Activated CD4-positive, alpha-beta memory T cell treated with anti-CD3 and anti-CD28 coated beads for 36 hours (primary cell): ENCODE measurements at regions of chr3 and their contacts with region 1.

Region 1: GRCh38 chr3:32467333-32468070 is 35.1 kb downstream of the CMTM6 start:
- DNase-seq: peak; percentile 82
- H3K4me3 Mint-ChIP-seq: peak overlapping the region; percentile 4
- H3K27ac Mint-ChIP-seq: no peak overlapping the region
- H3K4me1 Mint-ChIP-seq: peaks cover 40% of the 10 kb centered on the region
- H3K27me3 Mint-ChIP-seq: no peaks in the 10 kb centered on the region

Region 2: GRCh38 chr3:32177702-32178198 is 289.8 kb before region 1 on chr3:
- CTCF ChIA-PET with region 1: interaction called, 20 read pairs
- POLR2A ChIA-PET with region 1: no interaction called
- intact Hi-C with region 1: loop called (anchors 1 kb)
- DNase-seq: peak; percentile 73
- H3K4me3 Mint-ChIP-seq: peak overlapping the region; percentile 25
- H3K27ac Mint-ChIP-seq: no peak overlapping the region
- H3K4me1 Mint-ChIP-seq: peaks cover 12% of the 10 kb centered on the region
- H3K27me3 Mint-ChIP-seq: no peaks in the 10 kb centered on the region

Region 3: GRCh38 chr3:32374788-32375595 is 92.5 kb before region 1 on chr3:
- CTCF ChIA-PET with region 1: interaction called, 116 read pairs
- POLR2A ChIA-PET with region 1: no interaction called
- intact Hi-C with region 1: loop called (anchors 1 kb)
- DNase-seq: peak; percentile 67
- H3K4me3 Mint-ChIP-seq: peak overlapping the region; percentile 5
- H3K27ac Mint-ChIP-seq: peak overlapping the region; percentile 53
- H3K4me1 Mint-ChIP-seq: peaks cover 23% of the 10 kb centered on the region
- H3K27me3 Mint-ChIP-seq: no peaks in the 10 kb centered on the region

Region 4: DNA sequence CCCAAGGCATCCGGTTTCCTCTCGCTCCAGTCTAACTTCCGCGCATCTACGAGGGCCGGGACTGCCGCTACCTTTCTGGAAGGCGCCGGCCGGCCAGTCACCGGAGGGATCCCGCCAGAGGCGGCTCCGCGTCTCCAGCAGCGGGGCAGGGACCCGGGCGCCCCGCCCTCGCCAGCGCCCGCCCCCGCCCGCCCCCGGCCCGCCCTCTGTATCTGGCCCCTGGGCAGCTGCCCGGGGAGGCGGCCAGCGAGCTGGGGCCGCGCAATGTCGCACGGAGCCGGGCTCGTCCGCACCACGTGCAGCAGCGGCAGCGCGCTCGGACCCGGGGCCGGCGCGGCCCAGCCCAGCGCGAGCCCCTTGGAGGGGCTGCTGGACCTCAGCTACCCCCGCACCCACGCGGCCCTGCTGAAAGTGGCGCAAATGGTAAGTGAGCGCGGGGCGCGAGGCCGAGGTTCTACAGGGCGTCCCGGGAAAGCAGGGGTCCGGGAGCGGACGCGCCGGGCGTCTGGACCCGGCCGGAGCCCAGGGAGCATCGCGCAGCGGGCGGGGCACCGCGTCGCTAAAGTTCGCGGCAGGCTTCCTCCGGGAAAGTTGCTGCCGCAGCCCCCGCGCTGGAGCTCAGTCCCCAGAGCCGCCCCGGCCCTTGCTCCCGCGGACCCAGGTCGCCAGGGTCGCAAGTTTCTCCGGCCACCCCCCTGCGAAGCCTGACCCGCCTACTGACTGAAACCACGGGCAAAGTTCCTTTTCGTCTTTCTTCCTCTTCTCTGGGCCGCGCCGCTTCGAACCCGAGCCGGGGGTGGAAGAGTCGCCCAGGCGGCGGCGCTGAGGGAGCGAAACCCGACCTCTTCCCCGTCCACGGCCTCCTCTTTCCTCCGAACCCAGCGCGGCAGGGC is 75.6 kb before region 1 on chr3 and contains the start of gene CMTM7:
- CTCF ChIA-PET with region 1: interaction called, 33 read pairs
- POLR2A ChIA-PET with region 1: interaction called, 3 read pairs
- intact Hi-C with region 1: no loop called
- DNase-seq: peak; percentile 81
- H3K4me3 Mint-ChIP-seq: peak within 1 kb of the TSS; percentile 98
- H3K27ac Mint-ChIP-seq: peak within 1 kb of the TSS; percentile 95
- H3K4me1 Mint-ChIP-seq: peaks cover 55% of the 10 kb centered on the region
- H3K27me3 Mint-ChIP-seq: no peaks in the 10 kb centered on the region
- total RNA-seq, gene CMTM7: 46.1 to 47.1 TPM

Region 5: GRCh38 chr3:32414520-32415202 is 52.8 kb before region 1 on chr3:
- CTCF ChIA-PET with region 1: interaction called, 16 read pairs
- POLR2A ChIA-PET with region 1: no interaction called
- intact Hi-C with region 1: no loop called
- DNase-seq: peak; percentile 68
- H3K4me3 Mint-ChIP-seq: peak overlapping the region; percentile 49
- H3K27ac Mint-ChIP-seq: peak overlapping the region; percentile 94
- H3K4me1 Mint-ChIP-seq: peaks cover 65% of the 10 kb centered on the region
- H3K27me3 Mint-ChIP-seq: no peaks in the 10 kb centered on the region

Region 6: DNA sequence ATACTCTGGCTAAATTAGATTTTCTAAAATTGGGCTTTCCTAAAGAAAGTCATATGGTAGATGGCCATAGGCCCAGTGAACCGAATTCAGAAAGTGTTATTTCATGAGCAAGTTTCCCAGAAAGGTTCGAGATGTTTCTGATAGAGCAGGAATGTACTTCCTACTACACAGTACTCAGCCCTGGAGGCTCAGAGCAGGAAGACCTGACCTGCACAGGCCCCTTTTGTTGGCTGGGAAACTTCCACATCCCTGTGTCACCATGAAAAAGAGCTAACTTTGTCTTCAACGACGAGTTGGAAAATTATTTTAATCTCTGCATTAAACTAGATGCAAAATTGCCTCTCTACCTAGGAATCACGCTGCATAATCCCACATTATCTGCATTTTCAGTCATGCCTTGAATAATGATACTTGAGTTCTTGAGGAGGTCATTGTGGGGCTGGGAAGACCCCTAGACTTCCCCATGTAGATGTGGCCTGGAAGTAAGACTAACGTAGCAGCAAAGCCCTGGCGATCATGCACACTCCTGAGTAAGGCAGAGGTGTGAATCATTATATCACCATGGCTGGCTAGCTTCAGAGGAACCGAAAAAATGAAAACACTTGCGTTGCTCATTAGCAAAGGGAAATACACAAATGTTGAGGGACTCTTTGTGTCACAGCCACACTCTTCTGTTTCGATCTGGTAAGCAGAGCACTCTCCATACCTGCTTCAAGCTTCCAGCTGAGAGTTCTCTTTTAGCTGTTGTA is 28.7 kb before region 1 on chr3:
- CTCF ChIA-PET with region 1: interaction called, 24 read pairs
- POLR2A ChIA-PET with region 1: interaction called, 4 read pairs
- intact Hi-C with region 1: no loop called
- DNase-seq: peak; percentile 63
- H3K4me3 Mint-ChIP-seq: peak overlapping the region; percentile 21
- H3K27ac Mint-ChIP-seq: peak overlapping the region; percentile 87
- H3K4me1 Mint-ChIP-seq: peaks cover 74% of the 10 kb centered on the region
- H3K27me3 Mint-ChIP-seq: no peaks in the 10 kb centered on the region

Region 7: DNA sequence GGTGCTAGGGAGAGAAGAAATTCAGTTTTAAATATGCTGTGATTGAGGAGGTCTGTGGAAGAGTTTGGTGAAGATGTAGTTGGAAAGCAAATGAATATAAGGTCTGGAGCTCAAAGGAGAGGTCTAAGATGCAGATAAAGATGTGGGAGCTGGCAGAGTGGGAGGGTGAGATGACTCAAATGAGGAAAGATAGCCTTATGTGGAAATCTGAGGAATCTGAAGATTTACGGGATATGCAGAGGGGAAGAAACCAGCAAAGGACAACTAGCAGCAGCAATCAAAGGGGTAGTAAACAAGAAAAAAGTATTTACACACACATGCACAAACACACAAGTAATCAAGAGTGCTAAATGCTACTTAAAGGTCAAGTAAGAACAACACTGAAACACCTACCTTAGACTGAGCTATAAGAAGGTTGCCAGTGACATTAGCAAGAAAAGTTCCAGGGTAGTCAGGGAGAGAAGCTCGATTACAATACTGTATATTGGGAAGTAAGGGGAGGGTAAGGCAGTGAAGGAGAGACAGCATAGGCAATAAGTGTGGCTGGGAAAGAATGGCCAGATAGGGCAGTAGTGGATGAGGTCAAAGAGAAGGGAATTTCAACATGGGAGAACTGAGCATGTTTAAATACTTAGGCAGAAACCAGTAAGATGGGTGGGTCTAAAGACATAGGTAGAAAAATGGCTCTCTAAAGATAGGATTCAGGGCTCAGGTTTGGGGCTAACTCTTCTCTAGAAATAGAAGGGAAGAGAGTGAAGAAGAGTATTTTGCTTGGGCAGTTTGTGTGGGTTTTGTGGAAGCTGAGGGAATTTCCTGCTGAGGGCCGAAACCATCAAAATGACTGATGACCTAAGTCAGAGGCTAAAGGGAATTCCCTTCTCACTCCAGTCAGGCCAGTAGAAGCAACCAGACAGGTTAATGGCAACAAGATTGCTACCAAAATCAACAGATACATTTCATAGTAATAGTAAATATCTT is 26.2 kb after region 1 on chr3:
- CTCF ChIA-PET with region 1: interaction called, 19 read pairs
- POLR2A ChIA-PET with region 1: interaction called, 3 read pairs
- intact Hi-C with region 1: no loop called
- DNase-seq: peak; percentile 42
- H3K4me3 Mint-ChIP-seq: no peak overlapping the region
- H3K27ac Mint-ChIP-seq: no peak overlapping the region
- H3K4me1 Mint-ChIP-seq: peaks cover 21% of the 10 kb centered on the region
- H3K27me3 Mint-ChIP-seq: no peaks in the 10 kb centered on the region